Tibial artery (tissue), 4 donors: ENCODE measurements at regions of chr20 and their contacts with region 1.

Region 1: DNA sequence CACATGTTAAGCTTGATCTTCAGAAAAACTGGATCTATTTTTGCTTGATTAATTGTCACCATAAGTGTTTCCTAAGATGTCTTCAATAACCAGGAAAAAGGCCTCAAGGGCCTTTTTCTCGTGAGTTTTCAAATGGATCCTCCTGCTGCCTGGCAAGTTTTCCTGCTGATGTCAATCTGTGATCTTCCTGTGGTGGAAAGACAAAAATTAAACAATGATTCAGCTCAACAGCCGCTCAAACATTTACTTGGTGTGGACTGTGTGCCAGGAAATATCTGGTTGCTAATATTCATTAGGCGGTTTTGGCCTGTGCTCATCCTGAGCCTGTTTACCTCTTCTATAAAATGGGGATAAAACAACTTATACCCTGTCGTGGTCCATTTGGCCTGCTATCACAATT is 35.4 kb upstream of the SSTR4 start:
- DNase-seq: no peak
- H3K4me3 ChIP-seq: no peak overlapping the region
- H3K27ac ChIP-seq: no peak overlapping the region
- H3K4me1 ChIP-seq: no peaks in the 10 kb centered on the region
- H3K27me3 ChIP-seq: no peaks in the 10 kb centered on the region
- CTCF ChIP-seq: no peak

Region 2: DNA sequence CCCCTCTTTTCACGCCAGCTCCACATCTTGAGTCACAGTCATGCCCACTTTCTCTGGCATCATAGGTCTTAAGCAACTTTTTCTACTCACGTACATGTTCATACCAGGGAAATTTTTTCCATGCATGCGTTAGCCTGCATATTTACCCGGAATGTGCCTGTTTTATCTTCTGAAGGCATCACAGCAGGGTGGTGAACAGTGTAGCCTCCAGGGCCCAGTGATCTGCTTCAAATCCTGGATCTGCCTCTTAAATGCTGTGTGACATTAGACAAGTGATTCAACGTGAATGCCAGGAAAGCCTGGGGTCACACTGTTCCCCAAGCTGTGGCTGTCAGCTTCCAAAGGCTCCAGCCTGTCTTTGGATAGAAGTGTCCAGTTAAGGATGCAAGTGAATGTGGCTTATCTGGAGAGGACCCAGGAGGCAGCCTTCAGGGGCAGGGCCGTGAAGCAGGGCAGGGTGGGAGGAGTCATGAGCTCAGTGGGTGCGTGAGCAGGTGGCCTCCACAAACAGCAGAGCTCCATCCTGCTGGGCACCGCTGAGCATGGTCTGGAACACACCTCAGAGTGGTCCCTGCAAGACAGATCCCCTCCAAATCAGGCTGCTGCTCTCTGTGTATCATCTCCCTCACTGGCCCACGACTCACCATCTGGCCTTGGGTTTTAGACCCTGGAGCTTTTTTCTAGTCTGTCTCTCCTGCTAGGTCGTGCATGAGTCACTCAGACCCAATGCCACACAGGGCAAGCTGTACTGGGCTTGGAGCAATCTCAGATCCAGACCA is 116.7 kb after region 1 on chr20:
- intact Hi-C with region 1: no loop called
- DNase-seq: peak in 1 of 2 donors; percentile 60
- H3K4me3 ChIP-seq: no peak overlapping the region
- H3K27ac ChIP-seq: peak overlapping the region; percentile 31 to 43
- H3K4me1 ChIP-seq: peaks cover 0 to 6% (median 0%) of the 10 kb centered on the region in 4 donors
- H3K27me3 ChIP-seq: no peaks in the 10 kb centered on the region
- CTCF ChIP-seq: no peak

Region 3: GRCh38 chr20:23320317-23320716 is 320.6 kb after region 1 on chr20:
- intact Hi-C with region 1: loop called (anchors 10 kb)
- DNase-seq: no peak
- H3K4me3 ChIP-seq: no peak overlapping the region
- H3K27ac ChIP-seq: no peak overlapping the region
- H3K4me1 ChIP-seq: no peaks in the 10 kb centered on the region
- H3K27me3 ChIP-seq: peaks cover 0 to 3% of the 10 kb centered on the region in 2 donors
- CTCF ChIP-seq: peak in 1 of 2 experiments; percentile 17